ENCODE measurements at regions of chr6 and their contacts with region 1.

Region 1: DNA sequence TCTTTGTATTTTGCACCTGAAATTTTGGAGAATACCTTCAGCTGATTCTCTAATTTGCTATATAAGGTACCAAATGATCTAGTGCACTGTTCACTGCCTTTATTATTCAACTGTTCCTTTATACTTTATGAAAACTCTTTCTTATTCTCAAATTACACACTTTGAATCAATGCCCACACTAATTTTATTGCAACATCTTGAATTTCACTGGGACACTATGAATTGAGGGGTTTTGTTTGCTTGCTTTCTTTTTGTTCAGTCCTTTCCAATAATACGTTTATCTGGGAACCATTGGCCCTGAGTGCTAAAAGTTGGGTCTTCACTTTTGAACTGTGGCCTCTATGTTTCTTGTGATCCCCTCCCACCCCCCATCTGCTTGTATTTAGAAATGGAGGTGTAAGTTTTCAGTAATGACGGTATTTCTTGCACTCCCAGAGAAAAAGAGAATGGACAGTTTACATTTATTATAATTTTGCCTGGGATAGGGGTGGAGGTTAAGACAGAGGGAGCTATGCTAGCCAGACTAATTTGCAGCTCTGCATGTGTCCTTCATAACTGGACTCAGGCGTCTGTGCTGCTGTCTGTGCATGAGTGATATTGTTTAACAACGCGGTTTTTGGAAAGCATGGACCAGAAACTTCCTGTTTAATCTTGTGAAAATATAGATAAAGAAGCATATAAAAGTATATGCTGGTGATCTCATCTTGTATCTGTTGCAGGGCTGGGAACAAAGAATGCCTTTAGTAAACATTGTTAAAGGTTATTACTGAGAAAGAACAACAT is 98.1 kb downstream of the DNAH8 start:
- DNase-seq: no peak
- ATAC-seq: no peak
- H3K4me3 ChIP-seq: no peak overlapping the region
- H3K27ac ChIP-seq: no peak overlapping the region
- H3K4me1 ChIP-seq: no peaks in the 10 kb centered on the region
- H3K27me3 ChIP-seq: peaks cover 0 to 58% (median 18%) of the 10 kb centered on the region in 7 donors
- CTCF ChIP-seq: no peak

Region 2: GRCh38 chr6:38852215-38852614 is 39.0 kb after region 1 on chr6:
- intact Hi-C with region 1: loop called in 1 of 10 experiments (anchors 2 kb)
- DNase-seq: no peak
- ATAC-seq: no peak
- H3K4me3 ChIP-seq: no peak overlapping the region
- H3K27ac ChIP-seq: no peak overlapping the region
- H3K4me1 ChIP-seq: no peaks in the 10 kb centered on the region
- H3K27me3 ChIP-seq: peaks cover 0 to 27% (median 17%) of the 10 kb centered on the region in 7 donors
- CTCF ChIP-seq: no peak